Activated T-helper 2 cell treated with anti-CD3 and anti-CD28 coated beads, Interferon-gamma antibody, Interleukin-2, Interleukin-4, amounts not matched to agents 10 μg/mL and 5 μg/mL and 100 μg/mL, durations not matched to agents 14 hours and 24 hours and 36 hours (primary cell): ENCODE measurements at regions of chr11 and their contacts with region 1.

Region 1: DNA sequence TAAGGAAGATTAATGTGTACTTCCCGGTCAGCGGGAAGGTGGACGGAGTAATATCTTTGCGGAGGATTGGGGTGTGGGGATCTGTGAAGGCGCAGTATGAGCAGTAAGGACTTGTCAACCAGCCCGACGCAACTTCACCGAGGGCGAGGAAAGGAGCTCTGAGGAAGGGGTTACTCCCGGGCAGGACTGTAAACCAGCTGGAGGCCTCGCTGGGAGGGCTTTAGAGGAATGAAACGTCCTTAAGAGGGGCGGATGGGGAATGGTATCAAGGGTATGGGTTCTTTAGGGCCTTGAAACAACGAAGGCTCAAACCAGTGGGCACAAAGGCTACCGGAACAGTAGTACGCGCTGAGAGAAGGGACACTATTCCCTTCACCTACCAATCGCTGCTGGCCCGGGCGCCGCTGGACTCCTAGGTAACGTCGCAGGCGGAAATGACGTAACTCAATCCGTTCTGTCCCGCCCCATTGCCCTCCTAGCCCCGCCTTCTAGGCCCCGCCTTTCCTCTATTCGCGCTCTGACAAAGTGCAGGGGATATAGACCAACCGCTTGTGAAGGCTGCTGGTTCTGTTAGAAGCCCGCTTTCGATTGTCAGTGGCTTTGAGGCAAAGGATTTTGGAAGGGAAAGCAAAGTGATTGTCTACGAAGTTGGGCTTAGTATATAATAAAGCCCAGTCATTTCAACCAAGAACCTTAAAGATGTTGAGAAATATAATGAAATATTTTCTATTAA is at the start of gene C11orf65:
- DNase-seq: peak; percentile 94
- H3K4me3 Mint-ChIP-seq: peak within 1 kb of the TSS; percentile 96
- H3K27ac Mint-ChIP-seq: peak within 1 kb of the TSS; percentile 100
- H3K4me1 Mint-ChIP-seq: peaks cover 16% of the 10 kb centered on the region
- H3K27me3 Mint-ChIP-seq: no peaks in the 10 kb centered on the region
- total RNA-seq, gene C11orf65: 0.43 and 0.97 TPM in 2 replicates

Region 2: GRCh38 chr11:108008656-108009496 is 458.4 kb before region 1 on chr11 and contains the start of gene CUL5:
- intact Hi-C with region 1: loop called (anchors 5 kb)
- DNase-seq: peak; percentile 86
- H3K4me3 Mint-ChIP-seq: peak within 1 kb of the TSS; percentile 91
- H3K27ac Mint-ChIP-seq: peak within 1 kb of the TSS; percentile 94
- H3K4me1 Mint-ChIP-seq: peaks cover 16% of the 10 kb centered on the region
- H3K27me3 Mint-ChIP-seq: no peaks in the 10 kb centered on the region
- total RNA-seq, gene CUL5: 33.7 and 34.2 TPM in 2 replicates

Region 3: DNA sequence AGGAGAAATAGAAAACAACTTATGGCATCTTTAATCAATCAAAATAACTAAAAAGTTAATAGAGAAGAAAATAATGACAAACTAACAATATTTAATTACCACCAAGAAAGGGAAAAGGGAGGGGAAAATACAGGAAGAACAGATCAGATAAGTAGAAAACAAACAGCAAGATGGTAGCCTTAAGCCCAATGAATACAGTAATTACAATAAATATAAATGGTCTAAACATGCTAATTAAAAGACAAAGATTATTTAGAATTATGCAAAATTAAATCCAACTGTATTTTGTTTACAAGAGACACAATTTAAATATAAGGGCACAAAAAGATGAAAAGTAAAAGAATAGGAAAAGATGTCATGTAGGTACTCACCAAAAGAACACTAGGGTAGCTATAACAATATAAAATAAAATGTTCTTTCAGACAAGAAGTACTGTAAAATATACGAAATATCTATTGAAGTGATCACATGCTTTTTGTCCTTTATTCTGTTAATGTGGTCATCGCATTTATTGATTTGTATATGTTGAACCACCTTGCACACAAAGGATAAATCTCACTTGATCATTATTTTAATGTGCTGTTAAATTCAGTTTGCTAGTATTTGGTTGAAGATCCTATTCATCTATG is 13.9 kb before region 1 on chr11:
- intact Hi-C with region 1: loop called (anchors 1 kb)
- DNase-seq: no peak
- H3K4me3 Mint-ChIP-seq: no peak overlapping the region
- H3K27ac Mint-ChIP-seq: no peak overlapping the region
- H3K4me1 Mint-ChIP-seq: no peaks in the 10 kb centered on the region
- H3K27me3 Mint-ChIP-seq: no peaks in the 10 kb centered on the region

Region 4: GRCh38 chr11:108593214-108593922 is 126.1 kb after region 1 on chr11 and contains the start of gene EXPH5:
- intact Hi-C with region 1: loop called (anchors 1 kb)
- DNase-seq: peak; percentile 75
- H3K4me3 Mint-ChIP-seq: peak within 1 kb of the TSS; percentile 98
- H3K27ac Mint-ChIP-seq: peak within 1 kb of the TSS; percentile 91
- H3K4me1 Mint-ChIP-seq: peaks cover 17% of the 10 kb centered on the region
- H3K27me3 Mint-ChIP-seq: peaks cover 53% of the 10 kb centered on the region
- total RNA-seq, gene EXPH5: 1.2 and 1.8 TPM in 2 replicates

Region 5: GRCh38 chr11:108664730-108665525 is 197.7 kb after region 1 on chr11 and contains the start of gene DDX10:
- intact Hi-C with region 1: loop called (anchors 1 kb)
- DNase-seq: peak; percentile 98
- H3K4me3 Mint-ChIP-seq: peak within 1 kb of the TSS; percentile 99
- H3K27ac Mint-ChIP-seq: peak within 1 kb of the TSS; percentile 97
- H3K4me1 Mint-ChIP-seq: peaks cover 28% of the 10 kb centered on the region
- H3K27me3 Mint-ChIP-seq: peaks cover 6% of the 10 kb centered on the region
- total RNA-seq, gene DDX10: 57.8 TPM in 2 replicates